ENCODE measurements at regions of chr19 and their contacts with region 1.

Region 1: DNA sequence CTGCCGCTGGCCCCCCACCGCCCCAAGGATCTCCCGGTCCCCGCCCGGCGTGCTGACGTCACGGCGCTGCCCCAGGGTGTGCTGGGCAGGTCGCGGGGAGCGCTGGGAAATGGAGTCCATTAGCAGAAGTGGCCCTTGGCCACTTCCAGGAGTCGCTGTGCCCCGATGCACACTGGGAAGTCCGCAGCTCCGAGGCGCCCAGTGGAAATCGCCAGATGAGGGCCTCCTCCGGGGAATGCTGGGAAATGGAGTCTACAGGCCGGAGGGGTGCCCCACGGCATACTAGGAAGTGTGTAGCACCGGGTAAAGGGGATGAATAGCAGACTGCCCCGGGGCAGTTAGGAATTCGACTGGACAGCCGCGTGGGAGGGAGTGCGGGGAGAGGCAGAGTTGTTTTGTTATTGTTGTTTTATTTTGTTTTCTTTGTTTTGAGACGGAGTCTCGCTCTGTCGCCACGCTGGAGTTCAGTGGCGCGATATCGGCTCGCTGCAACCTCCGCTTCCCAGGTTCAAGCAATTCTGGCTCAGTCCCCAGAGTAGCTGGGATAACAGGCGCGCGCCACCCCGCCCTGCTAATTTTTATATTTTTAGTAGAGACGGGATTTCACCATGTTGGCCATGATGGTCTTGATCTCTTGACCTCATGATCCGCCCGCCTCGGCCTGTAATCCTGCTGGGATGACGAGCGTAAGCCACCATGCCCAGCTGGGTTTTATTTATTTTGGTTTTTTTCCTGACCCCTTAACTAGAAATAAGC is at the start of gene PPP1R12C:
- DNase-seq: peak; percentile 91 to 99 (median 97)
- ATAC-seq: peak; percentile 89
- H3K4me3 ChIP-seq: peak within 1 kb of the TSS; percentile 70
- H3K4me3 Mint-ChIP-seq: peak within 1 kb of the TSS; percentile 93
- H3K27ac ChIP-seq: peak within 1 kb of the TSS; percentile 27 to 44
- H3K27ac Mint-ChIP-seq: peak within 1 kb of the TSS; percentile 86
- H3K4me1 ChIP-seq: peaks cover 47% of the 10 kb centered on the region
- H3K4me1 Mint-ChIP-seq: peaks cover 37% of the 10 kb centered on the region
- H3K27me3 ChIP-seq: no peaks in the 10 kb centered on the region
- H3K27me3 Mint-ChIP-seq: no peaks in the 10 kb centered on the region
- CTCF ChIP-seq: no peak
- total RNA-seq, gene PPP1R12C: 123 to 136 TPM

Region 2: GRCh38 chr19:54684527-54684926 is 433.3 kb before region 1 on chr19:
- CTCF ChIA-PET with region 1: no interaction called
- POLR2A ChIA-PET with region 1: no interaction called
- intact Hi-C with region 1: no loop called
- DNase-seq: peak in 2 of 14 experiments; percentile 26 to 41
- ATAC-seq: no peak
- H3K4me3 ChIP-seq: no peak overlapping the region
- H3K4me3 Mint-ChIP-seq: no peak overlapping the region
- H3K27ac ChIP-seq: no peak overlapping the region
- H3K27ac Mint-ChIP-seq: no peak overlapping the region
- H3K4me1 ChIP-seq: no peaks in the 10 kb centered on the region
- H3K4me1 Mint-ChIP-seq: no peaks in the 10 kb centered on the region
- H3K27me3 ChIP-seq: peaks cover 3 to 17% of the 10 kb centered on the region in 2 experiments
- H3K27me3 Mint-ChIP-seq: peaks cover 30% of the 10 kb centered on the region
- CTCF ChIP-seq: no peak

Region 3: DNA sequence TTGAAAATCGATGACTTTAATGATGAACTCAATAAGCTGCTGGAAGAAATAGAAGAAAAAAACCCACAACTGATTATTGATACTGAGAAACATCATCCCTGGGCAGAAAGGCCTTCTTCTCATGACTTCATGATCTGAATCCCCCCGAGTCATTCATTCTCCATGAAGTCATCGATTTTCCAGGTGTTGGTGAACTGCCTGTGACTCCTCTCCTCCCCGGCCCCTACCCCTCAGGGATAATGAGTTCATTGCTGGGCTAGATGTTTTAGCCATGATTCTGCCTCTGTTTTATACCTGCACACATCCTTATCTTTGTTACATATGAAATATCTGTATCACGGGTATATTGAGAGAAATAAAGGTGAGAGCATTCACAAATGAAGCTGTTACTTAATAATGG is 117.1 kb before region 1 on chr19:
- CTCF ChIA-PET with region 1: no interaction called
- POLR2A ChIA-PET with region 1: no interaction called
- intact Hi-C with region 1: loop called in 1 of 2 experiments (anchors 5 kb)
- DNase-seq: no peak
- ATAC-seq: no peak
- H3K4me3 ChIP-seq: no peak overlapping the region
- H3K4me3 Mint-ChIP-seq: no peak overlapping the region
- H3K27ac ChIP-seq: no peak overlapping the region
- H3K27ac Mint-ChIP-seq: no peak overlapping the region
- H3K4me1 ChIP-seq: peaks cover 6% of the 10 kb centered on the region
- H3K4me1 Mint-ChIP-seq: peaks cover 2% of the 10 kb centered on the region
- H3K27me3 ChIP-seq: peaks cover 6 to 18% of the 10 kb centered on the region in 2 experiments
- H3K27me3 Mint-ChIP-seq: peaks cover 33% of the 10 kb centered on the region
- CTCF ChIP-seq: no peak

Region 4: DNA sequence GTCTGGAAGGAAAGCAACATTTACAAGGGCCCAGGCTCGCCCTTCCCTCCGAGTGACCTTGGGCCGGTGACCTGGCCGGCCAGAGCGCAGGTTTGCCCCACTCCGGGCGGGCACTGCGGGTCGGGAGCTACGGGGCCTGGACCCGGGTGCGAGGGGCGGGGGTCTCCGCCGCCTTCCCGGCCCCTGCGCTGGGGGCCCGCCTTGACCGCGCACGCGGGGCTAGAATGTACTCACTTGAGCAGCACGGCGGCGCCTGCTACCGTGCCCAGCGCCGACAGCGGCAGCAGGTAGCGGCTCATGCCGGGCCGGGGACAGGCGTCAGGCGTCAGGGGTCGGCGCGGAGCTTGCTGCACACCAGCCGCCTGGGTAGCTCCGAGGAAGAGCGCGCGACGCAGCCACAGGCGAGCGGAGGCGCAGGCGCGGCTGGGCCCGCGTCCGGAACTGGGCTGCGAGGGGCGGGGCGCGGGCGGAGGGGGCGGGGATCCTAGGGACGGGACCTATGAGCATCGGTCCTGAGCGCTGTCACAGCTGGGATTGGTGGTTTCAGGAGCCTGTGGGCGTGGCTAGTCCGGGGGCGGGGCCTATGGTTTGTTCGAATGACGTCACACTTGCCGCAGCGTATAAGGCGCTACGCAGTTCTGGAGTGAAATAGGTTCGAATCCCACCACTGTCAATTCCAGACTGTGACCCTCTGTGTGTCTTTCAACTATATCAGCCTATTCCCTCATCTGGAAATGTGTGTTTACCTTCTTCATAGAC is 54.9 kb before region 1 on chr19 and contains the start of gene RDH13:
- CTCF ChIA-PET with region 1: no interaction called
- POLR2A ChIA-PET with region 1: interaction called, 5 read pairs
- intact Hi-C with region 1: loop called in 1 of 2 experiments (anchors 1 kb)
- DNase-seq: peak; percentile 95 to 99 (median 97)
- ATAC-seq: peak; percentile 99
- H3K4me3 ChIP-seq: peak within 1 kb of the TSS; percentile 60
- H3K4me3 Mint-ChIP-seq: peak within 1 kb of the TSS; percentile 82
- H3K27ac ChIP-seq: peak within 1 kb of the TSS; percentile 21 to 29
- H3K27ac Mint-ChIP-seq: peak within 1 kb of the TSS; percentile 73
- H3K4me1 ChIP-seq: peaks cover 22% of the 10 kb centered on the region
- H3K4me1 Mint-ChIP-seq: peaks cover 5% of the 10 kb centered on the region
- H3K27me3 ChIP-seq: peaks cover 10 to 18% of the 10 kb centered on the region in 2 experiments
- H3K27me3 Mint-ChIP-seq: peaks cover 25% of the 10 kb centered on the region
- CTCF ChIP-seq: no peak
- total RNA-seq, gene RDH13: 7.4 to 8.8 TPM

Region 5: DNA sequence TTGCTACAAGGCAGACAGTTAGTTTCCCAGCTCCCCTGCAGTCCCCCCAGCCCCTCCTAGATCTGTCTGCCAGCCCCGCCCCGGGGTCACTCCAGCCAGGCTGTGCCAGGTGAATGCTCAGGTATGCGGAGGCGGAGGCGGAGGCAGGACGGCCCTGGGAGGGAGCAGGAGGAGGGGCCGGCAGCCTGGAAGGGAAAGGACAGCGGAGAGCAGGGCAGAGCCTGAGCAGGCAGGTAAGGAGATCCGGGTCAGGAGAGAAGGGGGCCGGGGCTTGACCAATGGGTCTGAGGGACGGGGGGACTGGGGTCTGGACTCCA is 42.2 kb before region 1 on chr19 and contains the start of gene EPS8L1:
- CTCF ChIA-PET with region 1: no interaction called
- POLR2A ChIA-PET with region 1: no interaction called
- intact Hi-C with region 1: no loop called
- DNase-seq: no peak
- ATAC-seq: no peak
- H3K4me3 ChIP-seq: no peak within 1 kb of the TSS
- H3K4me3 Mint-ChIP-seq: no peak within 1 kb of the TSS
- H3K27ac ChIP-seq: no peak within 1 kb of the TSS
- H3K27ac Mint-ChIP-seq: no peak within 1 kb of the TSS
- H3K4me1 ChIP-seq: peaks cover 11% of the 10 kb centered on the region
- H3K4me1 Mint-ChIP-seq: peaks cover 17% of the 10 kb centered on the region
- H3K27me3 ChIP-seq: peaks cover 22 to 35% of the 10 kb centered on the region in 2 experiments
- H3K27me3 Mint-ChIP-seq: peaks cover 72% of the 10 kb centered on the region
- CTCF ChIP-seq: no peak
- total RNA-seq, gene EPS8L1: 2.0 to 2.2 TPM

Region 6: GRCh38 chr19:55088543-55089341 is 29.1 kb before region 1 on chr19:
- CTCF ChIA-PET with region 1: interaction called, 8 read pairs
- POLR2A ChIA-PET with region 1: interaction called, 11 read pairs
- intact Hi-C with region 1: loop called in 1 of 2 experiments (anchors 2 kb)
- DNase-seq: peak; percentile 62 to 83 (median 73)
- ATAC-seq: peak; percentile 61
- H3K4me3 ChIP-seq: no peak overlapping the region
- H3K4me3 Mint-ChIP-seq: peak overlapping the region; percentile 49
- H3K27ac ChIP-seq: no peak overlapping the region
- H3K27ac Mint-ChIP-seq: no peak overlapping the region
- H3K4me1 ChIP-seq: peaks cover 23% of the 10 kb centered on the region
- H3K4me1 Mint-ChIP-seq: peaks cover 30% of the 10 kb centered on the region
- H3K27me3 ChIP-seq: peaks cover 32 to 42% of the 10 kb centered on the region in 2 experiments
- H3K27me3 Mint-ChIP-seq: peaks cover 54% of the 10 kb centered on the region
- CTCF ChIP-seq: peak; percentile 93

Region 7: DNA sequence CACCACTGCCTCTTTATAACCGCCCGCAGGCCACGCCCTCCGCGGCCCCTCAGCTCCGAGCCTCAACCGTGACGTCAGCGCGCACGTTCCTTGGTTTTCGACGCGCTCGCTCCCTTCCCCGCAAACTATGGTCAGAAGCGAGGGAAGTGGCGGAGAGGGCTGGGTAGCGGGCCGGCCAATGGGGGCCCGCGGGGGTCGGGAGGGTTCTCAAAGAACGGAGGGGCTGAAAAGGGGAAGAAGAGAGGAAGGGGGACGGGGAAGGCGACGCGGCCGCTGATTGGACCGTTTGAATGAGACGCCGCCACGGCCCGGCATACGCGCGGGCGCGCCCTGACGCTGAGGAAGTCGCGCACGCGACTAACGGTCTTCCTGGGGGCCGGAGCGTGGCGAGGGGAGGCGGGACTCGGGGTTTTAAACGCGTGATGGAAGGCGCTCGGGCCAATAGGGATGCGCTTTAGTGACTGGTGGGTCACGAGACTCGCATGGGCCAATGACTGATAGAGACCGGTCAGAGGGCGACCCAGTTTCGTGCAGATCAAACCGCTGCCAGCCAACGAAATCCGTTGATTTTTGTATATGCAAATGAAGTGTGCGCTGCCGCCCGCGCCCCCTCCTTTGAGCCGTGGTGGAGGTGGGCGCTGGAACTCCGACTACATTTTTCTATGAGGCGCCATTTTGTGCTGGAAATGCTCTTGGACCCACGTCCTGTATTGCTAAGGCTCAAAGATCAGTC is 290.2 kb after region 1 on chr19:
- CTCF ChIA-PET with region 1: no interaction called
- POLR2A ChIA-PET with region 1: interaction called, 5 read pairs
- intact Hi-C with region 1: loop called in 1 of 2 experiments (anchors 2 kb)
- DNase-seq: peak; percentile 91 to 99 (median 96)
- ATAC-seq: peak; percentile 92
- H3K4me3 ChIP-seq: peak overlapping the region; percentile 61
- H3K4me3 Mint-ChIP-seq: peak overlapping the region; percentile 94
- H3K27ac ChIP-seq: peak overlapping the region; percentile 96 to 100
- H3K27ac Mint-ChIP-seq: peak overlapping the region; percentile 99
- H3K4me1 ChIP-seq: peaks cover 30% of the 10 kb centered on the region
- H3K4me1 Mint-ChIP-seq: peaks cover 29% of the 10 kb centered on the region
- H3K27me3 ChIP-seq: no peaks in the 10 kb centered on the region
- H3K27me3 Mint-ChIP-seq: no peaks in the 10 kb centered on the region
- CTCF ChIP-seq: no peak

Region 8: GRCh38 chr19:55653758-55654539 is 536.1 kb after region 1 on chr19:
- CTCF ChIA-PET with region 1: no interaction called
- POLR2A ChIA-PET with region 1: interaction called, 10 read pairs
- intact Hi-C with region 1: loop called in 1 of 2 experiments (anchors 5 kb)
- DNase-seq: peak; percentile 98 to 100 (median 100)
- ATAC-seq: peak; percentile 79
- H3K4me3 ChIP-seq: peak overlapping the region; percentile 70
- H3K4me3 Mint-ChIP-seq: peak overlapping the region; percentile 94
- H3K27ac ChIP-seq: peak overlapping the region; percentile 96 to 100
- H3K27ac Mint-ChIP-seq: peak overlapping the region; percentile 93
- H3K4me1 ChIP-seq: peaks cover 46% of the 10 kb centered on the region
- H3K4me1 Mint-ChIP-seq: peaks cover 43% of the 10 kb centered on the region
- H3K27me3 ChIP-seq: no peaks in the 10 kb centered on the region
- H3K27me3 Mint-ChIP-seq: no peaks in the 10 kb centered on the region
- CTCF ChIP-seq: peak; percentile 100

Measured in CD4-positive, alpha-beta T cell (primary cell).